Caco-2 (cell line): ENCODE measurements at regions of chr3 and their contacts with region 1.

Region 1: GRCh38 chr3:149245738-149246451 is 24.3 kb upstream of the CP start:
- DNase-seq: peak in 1 of 2 experiments; percentile 62
- H3K4me3 ChIP-seq: no peak overlapping the region
- H3K4me3 Mint-ChIP-seq: peak overlapping the region; percentile 12
- H3K27ac Mint-ChIP-seq: no peak overlapping the region
- H3K4me1 ChIP-seq: peaks cover 29% of the 10 kb centered on the region
- H3K4me1 Mint-ChIP-seq: peaks cover 11% of the 10 kb centered on the region
- H3K27me3 ChIP-seq: no peaks in the 10 kb centered on the region
- H3K27me3 Mint-ChIP-seq: no peaks in the 10 kb centered on the region
- CTCF ChIP-seq: no peak

Region 2: DNA sequence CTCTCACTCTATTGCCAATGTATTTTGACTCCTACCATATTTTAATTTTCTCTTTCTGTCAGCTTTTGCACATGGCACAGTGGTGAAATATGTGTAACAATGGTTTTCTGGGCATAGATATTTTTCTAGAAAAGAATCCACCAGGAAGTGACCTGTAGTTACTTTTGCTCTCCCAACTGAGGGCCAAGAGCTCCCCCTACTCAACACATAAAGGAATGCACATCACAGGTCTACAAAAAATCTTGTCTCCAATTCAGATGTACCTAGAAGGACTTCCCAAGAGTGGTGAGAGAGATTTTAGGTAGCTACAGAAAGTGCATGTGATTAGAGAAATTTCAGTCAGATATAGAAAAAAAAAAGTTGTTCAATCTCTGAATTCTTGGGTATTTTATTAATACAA is 365.2 kb before region 1 on chr3:
- CTCF ChIA-PET with region 1: no interaction called
- POLR2A ChIA-PET with region 1: no interaction called
- intact Hi-C with region 1: no loop called
- DNase-seq: peak in 1 of 2 experiments; percentile 19
- H3K4me3 ChIP-seq: no peak overlapping the region
- H3K4me3 Mint-ChIP-seq: no peak overlapping the region
- H3K27ac Mint-ChIP-seq: no peak overlapping the region
- H3K4me1 ChIP-seq: no peaks in the 10 kb centered on the region
- H3K4me1 Mint-ChIP-seq: no peaks in the 10 kb centered on the region
- H3K27me3 ChIP-seq: no peaks in the 10 kb centered on the region
- H3K27me3 Mint-ChIP-seq: peaks cover 14% of the 10 kb centered on the region
- CTCF ChIP-seq: peak; percentile 52 to 55

Region 3: GRCh38 chr3:149215515-149215914 is 30.4 kb before region 1 on chr3:
- CTCF ChIA-PET with region 1: no interaction called
- POLR2A ChIA-PET with region 1: no interaction called
- intact Hi-C with region 1: loop called (anchors 1 kb)
- DNase-seq: no peak
- H3K4me3 ChIP-seq: no peak overlapping the region
- H3K4me3 Mint-ChIP-seq: no peak overlapping the region
- H3K27ac Mint-ChIP-seq: no peak overlapping the region
- H3K4me1 ChIP-seq: peaks cover 60% of the 10 kb centered on the region
- H3K4me1 Mint-ChIP-seq: peaks cover 31% of the 10 kb centered on the region
- H3K27me3 ChIP-seq: no peaks in the 10 kb centered on the region
- H3K27me3 Mint-ChIP-seq: no peaks in the 10 kb centered on the region
- CTCF ChIP-seq: no peak

Region 4: GRCh38 chr3:149224736-149225594 is 20.9 kb before region 1 on chr3:
- CTCF ChIA-PET with region 1: no interaction called
- POLR2A ChIA-PET with region 1: no interaction called
- intact Hi-C with region 1: loop called (anchors 1 kb)
- DNase-seq: peak in 1 of 2 experiments; percentile 45
- H3K4me3 ChIP-seq: peak overlapping the region; percentile 32
- H3K4me3 Mint-ChIP-seq: peak overlapping the region; percentile 86
- H3K27ac Mint-ChIP-seq: peak overlapping the region; percentile 76
- H3K4me1 ChIP-seq: peaks cover 34% of the 10 kb centered on the region
- H3K4me1 Mint-ChIP-seq: peaks cover 23% of the 10 kb centered on the region
- H3K27me3 ChIP-seq: no peaks in the 10 kb centered on the region
- H3K27me3 Mint-ChIP-seq: no peaks in the 10 kb centered on the region
- CTCF ChIP-seq: no peak

Region 5: DNA sequence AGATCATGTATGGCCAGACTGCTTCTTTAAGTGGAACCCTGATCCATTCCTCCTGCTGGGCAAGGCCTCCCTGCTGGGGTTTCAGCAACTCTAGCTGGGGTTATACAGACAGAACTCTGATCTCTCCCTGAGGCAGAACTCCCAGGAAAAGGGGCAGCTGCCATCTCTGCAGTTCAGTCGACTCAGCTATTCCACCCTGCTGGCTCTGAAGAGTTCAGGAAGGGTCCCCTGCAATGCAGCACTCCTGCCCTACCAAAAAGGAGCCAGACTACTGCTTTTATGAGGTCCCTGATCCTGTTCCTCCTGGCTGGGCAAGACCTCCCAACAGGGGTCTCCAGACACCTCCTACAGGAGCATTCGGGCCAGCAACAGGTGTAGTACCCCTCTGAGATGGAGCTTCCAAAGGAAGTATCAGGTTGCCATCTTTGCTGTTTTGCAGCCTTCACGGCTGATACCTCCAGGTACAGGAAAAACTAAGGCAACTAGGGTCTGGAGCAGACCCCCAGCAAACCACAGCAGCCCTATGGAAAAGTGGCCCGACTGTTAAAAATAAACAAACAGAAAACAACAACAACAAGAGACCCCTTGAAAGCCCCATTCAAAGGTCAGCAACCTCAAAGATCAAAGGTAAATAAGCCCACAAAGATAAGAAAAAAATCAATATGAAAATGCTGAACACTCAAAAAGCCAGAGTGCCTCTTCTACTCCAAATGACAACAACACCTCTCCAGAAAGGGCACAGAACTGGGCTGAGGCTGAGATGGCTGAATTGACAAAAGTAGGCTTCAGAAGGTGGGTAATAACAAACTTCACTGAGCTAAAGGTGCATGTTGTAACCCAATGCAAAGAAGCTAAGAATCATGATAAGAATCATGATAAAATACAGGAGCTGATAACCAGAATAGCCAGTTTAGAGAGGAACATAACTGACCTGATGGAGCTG is 10.0 kb before region 1 on chr3:
- CTCF ChIA-PET with region 1: no interaction called
- POLR2A ChIA-PET with region 1: no interaction called
- intact Hi-C with region 1: loop called (anchors 1 kb)
- DNase-seq: no peak
- H3K4me3 ChIP-seq: no peak overlapping the region
- H3K4me3 Mint-ChIP-seq: peak overlapping the region; percentile 10
- H3K27ac Mint-ChIP-seq: peak overlapping the region; percentile 31
- H3K4me1 ChIP-seq: peaks cover 23% of the 10 kb centered on the region
- H3K4me1 Mint-ChIP-seq: peaks cover 11% of the 10 kb centered on the region
- H3K27me3 ChIP-seq: no peaks in the 10 kb centered on the region
- H3K27me3 Mint-ChIP-seq: no peaks in the 10 kb centered on the region
- CTCF ChIP-seq: no peak